ENCODE measurements at regions of chr1 and their contacts with region 1.

Region 1: DNA sequence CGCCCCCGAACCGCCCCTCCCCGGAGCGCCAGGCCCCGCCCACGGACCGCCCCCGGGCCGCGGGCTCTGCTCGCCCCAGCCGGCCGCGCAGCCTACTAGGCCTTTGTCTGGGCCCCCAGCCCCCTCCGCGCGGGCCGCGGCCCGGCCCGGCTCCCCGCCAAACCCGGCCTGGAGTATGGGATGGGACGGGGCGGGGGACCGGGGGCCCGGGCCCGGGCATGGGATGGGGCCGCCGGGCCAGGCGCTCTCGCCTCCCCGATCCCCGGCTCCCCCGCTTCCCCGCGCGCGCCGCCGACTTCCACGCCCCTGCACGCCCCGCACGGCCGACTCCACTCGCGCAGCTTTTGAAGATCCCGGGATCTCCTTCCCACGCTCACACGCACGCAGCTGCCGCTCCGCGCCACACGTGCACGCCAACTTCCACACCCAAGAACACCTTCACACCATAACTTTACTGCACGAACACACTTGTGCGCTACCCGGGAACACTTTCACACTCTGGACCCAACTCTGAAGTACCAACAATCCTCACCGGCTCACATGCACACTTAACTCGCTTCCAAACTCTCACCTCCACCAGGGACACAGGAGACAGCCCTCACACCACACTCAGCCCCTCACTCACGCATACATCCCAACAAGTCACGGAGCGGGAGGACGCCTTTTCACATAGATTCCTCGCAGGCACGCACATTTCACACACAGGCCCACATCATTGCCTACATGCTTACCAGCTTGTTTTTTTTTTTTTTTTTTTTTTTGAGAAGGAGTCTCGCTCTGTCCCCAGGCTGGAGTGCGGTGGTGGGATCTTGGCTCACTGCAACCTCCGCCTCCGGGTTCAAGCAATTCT is 487 bp upstream of the HSPG2 start:
- DNase-seq: peak in 1 of 2 experiments; percentile 88
- H3K4me3 ChIP-seq: peak overlapping the region; percentile 27 to 61 (median 43)
- H3K27ac ChIP-seq: no peak overlapping the region
- H3K4me1 ChIP-seq: peaks cover 6 to 38% (median 27%) of the 10 kb centered on the region in 4 experiments
- H3K27me3 ChIP-seq: peaks cover 0 to 2% (median 0%) of the 10 kb centered on the region in 4 experiments; a peak in 2 of 7 replicates
- CTCF ChIP-seq: no peak
- EP300 ChIP-seq: peak in 1 of 2 experiments; percentile 72; a peak in 1 of 3 replicates
- POLR2A ChIP-seq: no peak
- RAD21 ChIP-seq: no peak

Region 2: DNA sequence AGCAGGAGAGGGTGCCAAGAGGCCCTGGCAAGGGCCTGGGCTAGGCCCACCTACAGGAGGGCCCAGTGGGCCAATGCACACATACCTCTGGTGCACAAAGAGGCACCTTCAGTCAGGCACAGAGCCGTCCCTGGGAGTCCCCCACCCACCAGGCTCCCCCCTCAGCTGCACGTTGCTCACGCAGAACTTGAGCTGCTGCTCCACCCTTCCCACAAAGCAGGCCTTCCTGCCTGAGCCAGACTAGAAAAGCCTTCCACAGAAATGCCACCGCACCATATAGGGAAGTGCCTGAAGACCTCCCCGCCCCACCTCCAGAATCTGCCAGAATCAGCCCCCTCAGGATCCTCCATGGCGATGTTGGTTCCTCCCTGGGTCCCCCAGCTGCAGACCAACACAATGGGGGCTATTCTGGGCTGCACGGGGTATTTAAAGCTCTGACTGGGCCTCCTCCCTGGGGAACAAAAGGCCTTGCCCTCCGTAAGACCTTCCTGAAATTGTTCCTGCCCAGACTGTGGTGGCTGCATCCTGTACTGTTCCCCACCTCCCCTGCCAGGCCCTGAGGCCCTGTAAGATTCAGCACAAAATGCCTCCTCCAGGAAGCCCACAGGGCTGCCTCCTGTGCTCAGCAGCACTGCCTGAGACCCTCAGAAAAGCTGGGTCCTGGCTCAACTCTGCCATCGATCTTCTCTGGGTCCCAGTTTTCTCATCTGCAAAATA is 27.7 kb before region 1 on chr1:
- CTCF ChIA-PET with region 1: interaction called, 5 read pairs
- POLR2A ChIA-PET with region 1: interaction called, 24 read pairs
- DNase-seq: no peak
- H3K4me3 ChIP-seq: no peak overlapping the region
- H3K27ac ChIP-seq: peak overlapping the region; percentile 49; the same call in 1 of the 2 replicates
- H3K4me1 ChIP-seq: peaks cover 15 to 50% (median 28%) of the 10 kb centered on the region in 4 experiments
- H3K27me3 ChIP-seq: no peaks in the 10 kb centered on the region
- CTCF ChIP-seq: no peak
- EP300 ChIP-seq: no peak
- POLR2A ChIP-seq: no peak
- RAD21 ChIP-seq: no peak

Region 3: DNA sequence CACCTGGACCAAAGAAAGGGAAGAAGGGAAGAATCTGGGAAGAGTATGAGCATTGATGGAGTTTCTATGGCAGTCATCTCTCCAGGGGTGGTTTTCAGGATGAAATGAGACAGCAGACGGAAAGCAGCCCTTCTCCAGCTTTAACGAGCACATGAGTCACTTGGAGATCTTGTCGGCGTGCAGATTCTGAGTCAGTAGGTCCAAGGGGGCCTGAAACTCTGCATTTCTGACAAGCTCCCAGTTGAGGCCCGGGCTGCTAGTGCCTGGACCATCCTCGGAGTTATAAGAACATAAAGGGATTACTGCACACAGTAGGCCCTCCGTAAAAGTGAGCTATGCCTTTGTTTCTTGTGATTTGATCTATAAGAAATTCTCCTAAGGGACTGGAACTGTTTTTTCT is 18.1 kb before region 1 on chr1:
- CTCF ChIA-PET with region 1: interaction called, 9 read pairs
- POLR2A ChIA-PET with region 1: interaction called, 38 read pairs
- DNase-seq: no peak
- H3K4me3 ChIP-seq: no peak overlapping the region
- H3K27ac ChIP-seq: no peak overlapping the region
- H3K4me1 ChIP-seq: peaks cover 12 to 28% (median 22%) of the 10 kb centered on the region in 4 experiments
- H3K27me3 ChIP-seq: no peaks in the 10 kb centered on the region
- CTCF ChIP-seq: no peak
- EP300 ChIP-seq: no peak
- POLR2A ChIP-seq: no peak
- RAD21 ChIP-seq: no peak

Region 4: DNA sequence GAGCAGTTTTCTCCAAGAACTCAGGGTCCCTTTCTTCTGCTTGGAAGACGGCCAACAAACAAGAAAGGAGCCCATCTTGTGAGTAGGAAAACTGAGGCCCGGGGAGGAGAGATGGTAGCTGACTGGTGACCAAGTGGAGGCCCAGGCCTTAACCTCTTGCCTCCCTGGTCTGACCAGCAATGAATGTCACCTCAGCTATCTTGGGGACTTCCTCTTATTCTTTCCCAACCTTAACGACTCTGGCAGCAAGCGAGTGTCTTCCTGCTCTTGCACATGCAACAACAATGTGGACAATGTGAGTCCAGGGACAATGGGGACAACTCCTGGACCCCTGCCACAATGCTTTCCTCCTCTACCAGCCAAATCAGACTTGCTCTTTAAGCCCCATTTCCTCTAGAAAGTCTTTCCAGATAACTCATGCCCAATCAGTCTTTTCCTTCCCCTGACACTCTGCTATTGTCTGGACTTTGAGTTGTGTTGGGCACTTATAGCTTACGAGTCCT is 13.0 kb before region 1 on chr1:
- CTCF ChIA-PET with region 1: interaction called, 9 read pairs
- POLR2A ChIA-PET with region 1: interaction called, 38 read pairs
- DNase-seq: no peak
- H3K4me3 ChIP-seq: no peak overlapping the region
- H3K27ac ChIP-seq: no peak overlapping the region
- H3K4me1 ChIP-seq: peaks cover 12 to 28% (median 19%) of the 10 kb centered on the region in 4 experiments
- H3K27me3 ChIP-seq: no peaks in the 10 kb centered on the region
- CTCF ChIP-seq: no peak
- EP300 ChIP-seq: no peak
- POLR2A ChIP-seq: no peak
- RAD21 ChIP-seq: no peak